ENCODE measurements at regions of chr14 and their contacts with region 1.

Region 1: GRCh38 chr14:98138666-98139065 is 1133.3 kb downstream of the BCL11B start:
- DNase-seq: no peak
- ATAC-seq: peak; percentile 72
- H3K4me3 ChIP-seq: no peak overlapping the region
- H3K27ac ChIP-seq: no peak overlapping the region
- H3K4me1 ChIP-seq: no peaks in the 10 kb centered on the region; the same call in 1 of the 2 replicates
- H3K27me3 ChIP-seq: no peaks in the 10 kb centered on the region
- CTCF ChIP-seq: peak; percentile 35 to 51 (median 49)
- EP300 ChIP-seq: no peak
- POLR2A ChIP-seq: no peak
- RAD21 ChIP-seq: peak; percentile 88

Region 2: GRCh38 chr14:97824218-97824617 is 314.4 kb before region 1 on chr14:
- CTCF ChIA-PET with region 1: no interaction called
- POLR2A ChIA-PET with region 1: no interaction called
- RAD21 ChIA-PET with region 1: no interaction called
- SMC1A ChIA-PET with region 1: no interaction called
- in situ Hi-C with region 1: no loop called
- intact Hi-C with region 1: no loop called
- DNase-seq: no peak
- ATAC-seq: no peak
- H3K4me3 ChIP-seq: no peak overlapping the region
- H3K27ac ChIP-seq: no peak overlapping the region
- H3K4me1 ChIP-seq: no peaks in the 10 kb centered on the region
- H3K27me3 ChIP-seq: no peaks in the 10 kb centered on the region
- CTCF ChIP-seq: no peak
- EP300 ChIP-seq: no peak
- POLR2A ChIP-seq: no peak
- RAD21 ChIP-seq: no peak

Region 3: DNA sequence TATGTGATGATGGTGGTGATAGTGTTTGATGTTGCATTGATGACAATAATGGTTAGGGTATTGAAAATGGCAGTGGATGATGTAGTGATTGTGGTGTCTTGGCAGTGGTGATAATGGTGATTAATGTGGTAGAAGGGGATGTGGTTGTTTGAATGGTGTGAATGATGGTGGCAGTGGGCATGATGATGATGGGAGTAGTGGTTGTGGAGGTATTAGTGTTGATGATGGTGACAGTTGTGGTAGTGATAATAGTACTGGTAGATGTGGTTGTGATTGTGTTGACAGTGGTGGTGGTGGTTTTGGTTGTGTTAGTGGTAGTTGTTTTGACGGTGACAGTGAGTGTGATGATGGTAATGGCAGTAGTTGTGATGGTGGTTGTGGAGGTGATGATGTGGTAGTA is 292.5 kb before region 1 on chr14:
- CTCF ChIA-PET with region 1: no interaction called
- POLR2A ChIA-PET with region 1: no interaction called
- RAD21 ChIA-PET with region 1: no interaction called
- SMC1A ChIA-PET with region 1: no interaction called
- in situ Hi-C with region 1: no loop called
- intact Hi-C with region 1: no loop called
- DNase-seq: no peak
- ATAC-seq: no peak
- H3K4me3 ChIP-seq: no peak overlapping the region
- H3K27ac ChIP-seq: no peak overlapping the region
- H3K4me1 ChIP-seq: no peaks in the 10 kb centered on the region
- H3K27me3 ChIP-seq: no peaks in the 10 kb centered on the region
- CTCF ChIP-seq: no peak
- EP300 ChIP-seq: no peak
- POLR2A ChIP-seq: no peak
- RAD21 ChIP-seq: no peak

Region 4: DNA sequence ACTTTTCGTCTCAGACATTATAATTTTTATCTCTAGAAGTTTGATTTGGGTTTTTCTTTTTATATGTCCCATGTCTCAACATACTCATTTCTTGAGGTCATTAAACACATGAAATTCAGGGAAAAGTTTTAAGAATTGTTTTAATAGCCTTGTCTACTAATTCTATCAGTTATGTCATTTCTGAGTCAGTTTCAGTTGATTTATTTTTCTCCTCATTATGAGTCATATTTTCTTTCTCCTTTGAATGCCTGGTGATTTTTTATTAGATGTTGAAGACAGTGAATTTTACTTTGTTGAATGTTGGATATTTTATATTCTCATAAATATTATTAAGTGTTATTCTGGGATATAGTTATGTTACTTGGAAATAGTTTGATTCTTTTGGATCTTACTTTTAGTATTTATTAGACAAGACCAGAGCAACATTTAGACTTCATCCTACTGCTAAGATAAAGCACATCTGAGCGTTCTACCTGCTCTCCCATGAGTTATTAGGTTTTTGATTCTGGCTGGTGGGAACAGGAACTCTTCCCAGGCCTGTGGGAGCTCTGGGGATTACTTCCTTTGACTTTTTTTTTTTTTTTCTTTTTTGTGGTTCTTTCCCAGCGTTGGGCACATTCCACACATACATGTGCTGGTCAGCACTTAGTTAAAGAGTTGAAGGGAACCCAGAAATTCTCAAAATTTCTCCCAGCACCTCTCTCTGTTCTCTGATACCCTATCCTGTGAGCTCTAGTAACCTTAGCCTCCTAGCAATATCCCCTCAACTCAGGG is 24.4 kb before region 1 on chr14:
- CTCF ChIA-PET with region 1: interaction called, 18 read pairs
- POLR2A ChIA-PET with region 1: interaction called, 16 read pairs
- RAD21 ChIA-PET with region 1: interaction called, 6 read pairs
- SMC1A ChIA-PET with region 1: interaction called, 32 read pairs
- in situ Hi-C with region 1: no loop called
- intact Hi-C with region 1: no loop called
- DNase-seq: no peak
- ATAC-seq: no peak
- H3K4me3 ChIP-seq: no peak overlapping the region
- H3K27ac ChIP-seq: no peak overlapping the region
- H3K4me1 ChIP-seq: no peaks in the 10 kb centered on the region
- H3K27me3 ChIP-seq: no peaks in the 10 kb centered on the region
- CTCF ChIP-seq: no peak
- EP300 ChIP-seq: no peak
- POLR2A ChIP-seq: no peak
- RAD21 ChIP-seq: no peak

Region 5: DNA sequence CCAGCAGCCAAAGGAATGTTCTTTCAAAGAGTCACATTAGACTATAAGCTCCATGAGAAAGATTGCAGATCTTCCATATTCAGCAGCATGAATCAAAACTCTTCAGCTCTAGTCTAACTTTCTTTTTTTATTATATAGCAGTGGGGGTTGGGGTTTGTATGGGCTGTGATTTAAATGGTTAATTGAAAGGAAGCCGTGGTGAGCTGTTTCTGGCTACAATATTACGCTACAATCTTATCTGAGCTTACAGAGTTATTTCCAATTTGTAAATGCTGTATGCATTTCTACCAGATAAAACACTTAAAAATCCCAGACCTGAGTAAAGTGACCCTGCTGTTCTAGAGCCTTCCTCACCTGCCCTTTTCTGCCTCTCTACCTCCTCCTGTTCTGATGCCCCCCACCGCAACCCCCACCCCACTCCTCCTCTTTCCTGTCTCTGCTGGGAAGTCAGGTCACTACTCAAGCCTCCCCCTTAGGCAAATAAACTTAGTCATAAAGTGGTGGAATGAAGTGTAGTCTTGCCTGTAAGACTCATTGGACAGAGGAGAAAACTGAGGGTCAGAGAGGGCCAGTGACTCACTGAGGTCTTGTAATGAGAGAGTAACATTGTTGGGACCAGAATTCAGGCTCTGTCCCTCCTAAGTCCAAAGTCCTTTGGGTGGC is 43.9 kb after region 1 on chr14:
- CTCF ChIA-PET with region 1: interaction called, 158 read pairs
- POLR2A ChIA-PET with region 1: interaction called, 10 read pairs
- RAD21 ChIA-PET with region 1: interaction called, 94 read pairs
- SMC1A ChIA-PET with region 1: interaction called, 461 read pairs
- in situ Hi-C with region 1: no loop called
- intact Hi-C with region 1: no loop called
- DNase-seq: no peak
- ATAC-seq: peak; percentile 35; the same call in 2 of the 3 replicates
- H3K4me3 ChIP-seq: no peak overlapping the region
- H3K27ac ChIP-seq: no peak overlapping the region
- H3K4me1 ChIP-seq: no peaks in the 10 kb centered on the region
- H3K27me3 ChIP-seq: no peaks in the 10 kb centered on the region
- CTCF ChIP-seq: no peak
- EP300 ChIP-seq: no peak
- POLR2A ChIP-seq: no peak
- RAD21 ChIP-seq: no peak

Region 6: GRCh38 chr14:98210045-98210672 is 71.5 kb after region 1 on chr14:
- CTCF ChIA-PET with region 1: interaction called, 33 read pairs
- POLR2A ChIA-PET with region 1: interaction called, 4 read pairs
- RAD21 ChIA-PET with region 1: interaction called, 407 read pairs
- SMC1A ChIA-PET with region 1: interaction called, 92 read pairs
- in situ Hi-C with region 1: no loop called
- intact Hi-C with region 1: no loop called
- DNase-seq: no peak
- ATAC-seq: peak; percentile 47
- H3K4me3 ChIP-seq: no peak overlapping the region
- H3K27ac ChIP-seq: no peak overlapping the region
- H3K4me1 ChIP-seq: peaks cover 7% of the 10 kb centered on the region
- H3K27me3 ChIP-seq: no peaks in the 10 kb centered on the region
- CTCF ChIP-seq: no peak
- EP300 ChIP-seq: no peak
- POLR2A ChIP-seq: no peak
- RAD21 ChIP-seq: 0 out of 2 replicates have a peak, but pooled peaks have one; percentile 0

Region 7: GRCh38 chr14:98494582-98494981 is 355.9 kb after region 1 on chr14:
- CTCF ChIA-PET with region 1: interaction called, 10 read pairs
- POLR2A ChIA-PET with region 1: no interaction called
- RAD21 ChIA-PET with region 1: no interaction called
- SMC1A ChIA-PET with region 1: no interaction called
- in situ Hi-C with region 1: no loop called
- intact Hi-C with region 1: no loop called
- DNase-seq: no peak
- ATAC-seq: no peak; the same call in 2 of the 3 replicates
- H3K4me3 ChIP-seq: no peak overlapping the region
- H3K27ac ChIP-seq: no peak overlapping the region
- H3K4me1 ChIP-seq: no peaks in the 10 kb centered on the region
- H3K27me3 ChIP-seq: no peaks in the 10 kb centered on the region
- CTCF ChIP-seq: no peak
- EP300 ChIP-seq: no peak
- POLR2A ChIP-seq: no peak
- RAD21 ChIP-seq: no peak

Region 8: DNA sequence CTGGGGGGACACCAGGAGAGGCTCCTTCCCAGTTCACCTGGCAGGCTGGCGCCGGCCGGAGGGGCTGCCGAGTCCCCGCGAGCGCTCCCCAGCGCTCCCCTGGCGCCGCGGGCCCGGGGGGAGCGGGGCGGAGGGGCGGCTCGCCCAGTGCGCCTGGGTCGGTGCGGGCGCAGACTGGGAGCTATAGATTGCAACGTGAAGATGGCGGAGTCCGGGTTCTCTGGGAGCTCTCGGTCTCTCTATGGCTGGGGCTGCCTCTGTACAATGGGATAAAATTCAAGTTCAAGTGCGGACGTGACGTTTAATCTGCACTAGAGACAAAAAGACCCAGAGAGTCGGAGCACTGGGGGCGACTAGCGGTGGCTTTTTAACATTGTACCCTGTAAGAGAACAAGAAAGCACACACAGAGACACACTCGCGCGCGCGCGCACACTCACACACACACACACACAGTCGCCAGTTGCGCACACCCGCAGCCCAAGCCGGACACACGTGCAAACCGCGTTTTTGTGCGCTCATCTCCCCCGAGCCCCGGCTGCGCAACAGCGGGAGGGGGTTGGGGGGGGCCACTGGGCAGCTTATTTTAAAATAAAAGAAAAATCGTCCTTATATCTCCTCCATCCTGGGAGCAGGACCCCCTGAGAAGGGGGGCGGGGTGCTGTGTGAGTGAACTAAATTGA is 1133.4 kb after region 1 on chr14 and contains the start of gene BCL11B:
- CTCF ChIA-PET with region 1: interaction called, 83 read pairs
- POLR2A ChIA-PET with region 1: no interaction called
- RAD21 ChIA-PET with region 1: interaction called, 91 read pairs
- SMC1A ChIA-PET with region 1: interaction called, 63 read pairs
- in situ Hi-C with region 1: loop called (anchors 25 kb)
- intact Hi-C with region 1: loop called (anchors 2 kb)
- DNase-seq: peak; percentile 24
- ATAC-seq: peak; percentile 79
- H3K4me3 ChIP-seq: peak within 1 kb of the TSS; percentile 80
- H3K27ac ChIP-seq: no peak within 1 kb of the TSS
- H3K4me1 ChIP-seq: peaks cover 12% of the 10 kb centered on the region
- H3K27me3 ChIP-seq: peaks cover 10 to 32% of the 10 kb centered on the region in 2 experiments
- CTCF ChIP-seq: peak; percentile 43 to 53 (median 46); a peak in 5 of 6 replicates
- EP300 ChIP-seq: no peak
- POLR2A ChIP-seq: peak; percentile 62; the same call in 1 of the 2 replicates
- RAD21 ChIP-seq: peak; percentile 56
- polyA plus RNA-seq, gene BCL11B: 0.38 to 1.7 TPM

Measured in GM12878 (cell line).